ENCODE measurements at regions of chr7 and their contacts with region 1.

Region 1: DNA sequence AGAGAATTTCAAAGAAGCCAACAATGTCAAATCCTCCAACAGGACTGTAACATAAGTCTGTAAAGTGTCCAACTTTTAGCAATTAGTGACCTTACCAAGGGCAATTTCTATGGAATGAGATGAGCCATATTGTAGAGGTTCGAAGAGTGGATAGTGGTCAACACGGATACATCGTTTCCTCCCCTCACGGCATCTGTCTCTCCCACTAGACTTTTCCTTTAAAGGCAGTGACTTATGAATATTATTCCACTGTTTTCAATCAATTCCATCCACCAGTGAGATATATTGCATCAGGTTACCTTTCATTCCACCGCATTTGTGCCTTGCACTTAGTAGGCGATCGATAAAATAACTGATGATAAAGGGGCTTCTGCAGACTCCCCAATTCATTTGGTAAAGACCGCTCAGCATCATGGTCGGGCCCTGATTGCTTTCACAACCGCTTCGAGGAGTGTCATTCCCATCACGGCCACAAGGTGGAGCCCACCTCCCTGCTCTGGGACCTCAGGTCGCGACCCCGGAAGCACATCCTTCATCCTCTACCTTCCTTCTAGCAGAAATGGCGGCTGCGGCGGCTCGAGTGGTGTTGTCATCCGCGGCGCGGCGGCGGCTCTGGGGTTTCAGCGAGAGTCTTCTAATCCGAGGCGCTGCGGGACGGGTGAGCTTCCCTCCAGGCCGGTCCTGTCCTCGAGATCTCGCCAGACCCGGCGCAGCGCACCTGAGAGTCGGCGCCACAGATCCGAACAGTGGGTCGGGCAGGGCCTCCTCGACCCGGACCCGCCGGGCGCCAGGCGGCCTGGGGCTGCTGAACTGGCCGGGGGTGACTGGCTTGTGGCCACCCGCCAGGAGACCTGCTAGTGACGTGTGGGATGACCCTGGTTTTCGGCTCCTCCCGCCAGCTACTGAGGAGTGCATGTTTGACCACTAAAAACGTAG is at the start of gene PMPCB:
- DNase-seq: peak; percentile 96
- H3K4me3 ChIP-seq: peak within 1 kb of the TSS; percentile 89 to 95
- H3K27ac ChIP-seq: peak within 1 kb of the TSS; percentile 78 to 89
- H3K4me1 ChIP-seq: peaks cover 7 to 15% of the 10 kb centered on the region in 2 experiments; a peak in 2 of 4 replicates
- H3K27me3 ChIP-seq: no peaks in the 10 kb centered on the region
- CTCF ChIP-seq: peak; percentile 98
- EP300 ChIP-seq: peak in 1 of 2 experiments; percentile 31; a peak in 1 of 4 replicates
- RAD21 ChIP-seq: peak; percentile 73
- polyA plus RNA-seq, gene PMPCB: 116 and 142 TPM in 2 replicates

Region 2: DNA sequence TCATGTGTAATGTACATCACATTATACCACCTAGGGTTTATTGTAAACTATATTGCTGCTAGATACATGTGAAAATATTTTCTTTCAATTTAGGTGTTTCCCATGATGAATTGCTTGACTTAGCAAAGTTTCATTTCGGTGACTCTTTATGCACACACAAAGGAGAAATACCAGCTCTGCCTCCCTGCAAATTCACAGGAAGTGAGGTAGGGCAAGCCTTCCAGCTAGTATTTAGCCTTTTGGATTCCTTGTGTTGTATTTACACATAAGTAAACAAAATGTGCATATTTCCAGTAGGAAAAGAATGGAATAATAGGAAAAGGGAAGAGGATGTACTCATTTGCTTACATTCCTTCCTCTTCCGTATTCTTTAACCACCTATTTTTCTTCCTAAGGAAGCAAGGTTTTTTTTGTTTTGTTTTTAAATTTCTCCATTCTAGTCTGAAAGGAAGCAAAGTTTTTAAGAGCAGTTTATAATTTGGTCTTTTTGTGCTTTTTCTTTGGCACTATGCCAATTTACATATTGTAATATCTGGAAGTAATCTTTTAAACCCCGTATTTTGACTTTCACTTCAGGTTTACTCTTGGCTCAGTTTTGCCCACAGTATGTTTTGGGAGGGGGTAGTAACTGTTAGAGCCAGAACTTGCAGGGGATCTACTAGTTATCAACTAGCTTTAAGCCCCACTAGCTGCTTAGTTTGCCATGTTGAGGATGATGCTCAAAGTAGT is 10.5 kb after region 1 on chr7:
- CTCF ChIA-PET with region 1: interaction called, 17 read pairs
- POLR2A ChIA-PET with region 1: interaction called, 6 read pairs
- DNase-seq: no peak
- H3K4me3 ChIP-seq: no peak overlapping the region
- H3K27ac ChIP-seq: no peak overlapping the region
- H3K4me1 ChIP-seq: no peaks in the 10 kb centered on the region; a peak in 1 of 4 replicates
- H3K27me3 ChIP-seq: no peaks in the 10 kb centered on the region
- CTCF ChIP-seq: no peak
- EP300 ChIP-seq: no peak
- RAD21 ChIP-seq: no peak

Measured in SK-N-SH (cell line).